Activated CD4-positive, alpha-beta T cell treated with anti-CD3 and anti-CD28 coated beads, Interleukin-2, amount 10 ng/mL, durations not matched to agents 24 days and 14 days (primary cell): ENCODE measurements at regions of chr6 and their contacts with region 1.

Region 1: GRCh38 chr6:110039364-110039980 is 61.4 kb downstream of the GPR6 start:
- DNase-seq: peak; percentile 94
- H3K4me3 Mint-ChIP-seq: peak overlapping the region; percentile 82
- H3K27ac Mint-ChIP-seq: peak overlapping the region; percentile 84
- H3K4me1 Mint-ChIP-seq: peaks cover 14% of the 10 kb centered on the region
- H3K27me3 Mint-ChIP-seq: peaks cover 1% of the 10 kb centered on the region

Region 2: DNA sequence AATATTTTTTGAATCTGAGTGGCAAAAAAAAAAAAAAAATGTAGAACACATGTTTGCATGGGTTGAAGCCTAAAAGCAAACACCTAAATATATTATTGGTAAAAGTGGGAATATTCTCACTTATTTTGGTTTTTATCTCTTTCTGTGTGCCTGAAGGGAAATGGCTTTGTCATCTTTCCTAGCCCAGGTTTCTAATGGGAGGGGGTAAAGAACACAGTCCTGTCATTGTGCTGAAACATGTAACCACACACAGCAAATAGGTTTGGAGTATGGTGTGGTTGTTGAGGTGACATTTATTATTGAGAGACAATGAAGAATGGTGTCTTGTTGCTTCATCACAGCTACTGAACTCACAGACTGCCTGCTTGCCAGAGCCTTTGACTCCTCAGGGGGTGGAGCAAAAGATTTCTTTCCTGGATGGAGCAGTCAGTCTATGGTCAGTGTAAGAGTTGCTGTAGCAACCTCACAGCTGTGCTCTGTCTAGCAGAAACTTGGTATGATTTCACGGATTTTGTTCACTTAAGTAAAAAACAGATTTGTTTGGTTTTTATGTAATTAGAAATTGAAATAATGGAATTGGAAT is 874.0 kb before region 1 on chr6:
- intact Hi-C with region 1: no loop called
- DNase-seq: no peak
- H3K4me3 Mint-ChIP-seq: no peak overlapping the region
- H3K27ac Mint-ChIP-seq: no peak overlapping the region
- H3K4me1 Mint-ChIP-seq: no peaks in the 10 kb centered on the region
- H3K27me3 Mint-ChIP-seq: no peaks in the 10 kb centered on the region

Region 3: GRCh38 chr6:109526905-109527628 is 512.4 kb before region 1 on chr6:
- intact Hi-C with region 1: loop called (anchors 1 kb)
- DNase-seq: peak; percentile 89
- H3K4me3 Mint-ChIP-seq: no peak overlapping the region
- H3K27ac Mint-ChIP-seq: no peak overlapping the region
- H3K4me1 Mint-ChIP-seq: peaks cover 4% of the 10 kb centered on the region
- H3K27me3 Mint-ChIP-seq: peaks cover 8% of the 10 kb centered on the region

Region 4: GRCh38 chr6:109595998-109596397 is 443.5 kb before region 1 on chr6:
- intact Hi-C with region 1: loop called (anchors 5 kb)
- DNase-seq: peak; percentile 63
- H3K4me3 Mint-ChIP-seq: no peak overlapping the region
- H3K27ac Mint-ChIP-seq: no peak overlapping the region
- H3K4me1 Mint-ChIP-seq: peaks cover 1% of the 10 kb centered on the region
- H3K27me3 Mint-ChIP-seq: no peaks in the 10 kb centered on the region

Region 5: DNA sequence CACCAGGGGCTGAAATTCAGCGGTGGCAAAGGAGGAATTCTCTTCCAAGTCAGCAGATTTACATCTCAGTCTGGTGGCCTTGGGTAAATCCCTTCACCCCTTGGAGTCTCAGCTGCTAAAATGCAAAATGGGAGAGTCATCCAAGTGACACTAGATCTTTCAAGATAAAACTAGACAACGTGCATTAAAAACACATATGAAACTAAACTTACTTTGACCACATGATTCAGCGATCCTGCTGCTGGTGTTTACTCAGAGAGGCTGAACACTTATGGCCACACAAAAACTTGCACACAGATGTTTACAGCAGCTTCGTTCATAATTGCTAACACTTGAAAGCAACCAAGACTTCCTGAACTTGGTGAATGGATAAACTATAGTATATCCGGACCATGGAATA is 116.7 kb before region 1 on chr6:
- intact Hi-C with region 1: no loop called
- DNase-seq: no peak
- H3K4me3 Mint-ChIP-seq: no peak overlapping the region
- H3K27ac Mint-ChIP-seq: no peak overlapping the region
- H3K4me1 Mint-ChIP-seq: no peaks in the 10 kb centered on the region
- H3K27me3 Mint-ChIP-seq: peaks cover 2% of the 10 kb centered on the region